ENCODE measurements at regions of chr2 and their contacts with region 1.

Region 1: GRCh38 chr2:168118733-168119514 is 128.5 kb downstream of the STK39 start:
- DNase-seq: no peak
- ATAC-seq: no peak
- H3K4me3 Mint-ChIP-seq: no peak overlapping the region
- H3K27ac Mint-ChIP-seq: no peak overlapping the region
- H3K4me1 Mint-ChIP-seq: no peaks in the 10 kb centered on the region
- H3K27me3 Mint-ChIP-seq: no peaks in the 10 kb centered on the region

Region 2: GRCh38 chr2:167292430-167293171 is 826.3 kb before region 1 on chr2:
- CTCF ChIA-PET with region 1: no interaction called
- POLR2A ChIA-PET with region 1: no interaction called
- intact Hi-C with region 1: loop called in 1 of 2 experiments (anchors 10 kb)
- DNase-seq: peak; percentile 86
- ATAC-seq: peak; percentile 99
- H3K4me3 Mint-ChIP-seq: peak within 1 kb of the TSS; percentile 65
- H3K27ac Mint-ChIP-seq: no peak within 1 kb of the TSS
- H3K4me1 Mint-ChIP-seq: peaks cover 13% of the 10 kb centered on the region
- H3K27me3 Mint-ChIP-seq: peaks cover 38% of the 10 kb centered on the region

Region 3: DNA sequence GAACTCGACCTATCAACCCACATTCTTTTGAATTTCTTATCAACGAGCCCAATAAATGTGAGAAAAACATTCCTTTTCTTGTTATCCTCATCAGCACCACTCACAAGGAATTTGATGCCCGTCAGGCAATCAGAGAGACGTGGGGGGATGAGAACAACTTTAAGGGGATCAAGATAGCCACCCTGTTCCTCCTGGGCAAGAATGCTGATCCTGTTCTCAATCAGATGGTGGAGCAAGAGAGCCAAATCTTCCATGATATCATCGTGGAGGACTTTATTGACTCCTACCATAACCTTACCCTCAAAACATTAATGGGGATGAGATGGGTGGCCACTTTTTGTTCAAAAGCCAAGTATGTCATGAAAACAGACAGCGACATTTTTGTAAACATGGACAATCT is 249.7 kb before region 1 on chr2:
- CTCF ChIA-PET with region 1: interaction called, 3 read pairs
- POLR2A ChIA-PET with region 1: no interaction called
- intact Hi-C with region 1: loop called (anchors 5 to 10 kb)
- DNase-seq: no peak
- ATAC-seq: no peak
- H3K4me3 Mint-ChIP-seq: no peak overlapping the region
- H3K27ac Mint-ChIP-seq: no peak overlapping the region
- H3K4me1 Mint-ChIP-seq: no peaks in the 10 kb centered on the region
- H3K27me3 Mint-ChIP-seq: peaks cover 13% of the 10 kb centered on the region

Region 4: DNA sequence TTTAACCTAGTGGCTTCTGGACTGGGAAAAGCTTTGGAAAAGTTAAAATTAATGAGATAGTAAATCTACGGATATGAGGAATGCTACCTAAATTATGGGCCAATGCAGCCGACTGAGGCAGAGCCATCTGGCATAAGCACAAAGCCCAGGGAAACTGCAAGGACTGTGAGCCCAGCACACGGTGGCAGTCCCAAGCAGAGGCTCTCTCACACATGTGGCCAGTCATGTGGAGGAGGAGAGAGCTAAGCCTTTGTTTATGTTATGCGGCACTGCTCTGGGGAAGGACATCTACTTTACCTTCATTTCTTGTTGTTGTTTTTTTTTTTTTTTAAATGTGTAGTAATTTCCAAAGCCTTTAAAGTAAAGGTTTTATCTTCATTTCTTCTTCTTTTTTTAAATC is 138.5 kb before region 1 on chr2:
- CTCF ChIA-PET with region 1: no interaction called
- POLR2A ChIA-PET with region 1: no interaction called
- intact Hi-C with region 1: no loop called
- DNase-seq: no peak
- ATAC-seq: no peak
- H3K4me3 Mint-ChIP-seq: no peak overlapping the region
- H3K27ac Mint-ChIP-seq: no peak overlapping the region
- H3K4me1 Mint-ChIP-seq: no peaks in the 10 kb centered on the region
- H3K27me3 Mint-ChIP-seq: no peaks in the 10 kb centered on the region

Region 5: GRCh38 chr2:168107322-168107721 is 11.6 kb before region 1 on chr2:
- CTCF ChIA-PET with region 1: interaction called, 54 read pairs
- POLR2A ChIA-PET with region 1: no interaction called
- intact Hi-C with region 1: no loop called
- DNase-seq: no peak
- ATAC-seq: no peak
- H3K4me3 Mint-ChIP-seq: no peak overlapping the region
- H3K27ac Mint-ChIP-seq: no peak overlapping the region
- H3K4me1 Mint-ChIP-seq: no peaks in the 10 kb centered on the region
- H3K27me3 Mint-ChIP-seq: no peaks in the 10 kb centered on the region

Region 6: DNA sequence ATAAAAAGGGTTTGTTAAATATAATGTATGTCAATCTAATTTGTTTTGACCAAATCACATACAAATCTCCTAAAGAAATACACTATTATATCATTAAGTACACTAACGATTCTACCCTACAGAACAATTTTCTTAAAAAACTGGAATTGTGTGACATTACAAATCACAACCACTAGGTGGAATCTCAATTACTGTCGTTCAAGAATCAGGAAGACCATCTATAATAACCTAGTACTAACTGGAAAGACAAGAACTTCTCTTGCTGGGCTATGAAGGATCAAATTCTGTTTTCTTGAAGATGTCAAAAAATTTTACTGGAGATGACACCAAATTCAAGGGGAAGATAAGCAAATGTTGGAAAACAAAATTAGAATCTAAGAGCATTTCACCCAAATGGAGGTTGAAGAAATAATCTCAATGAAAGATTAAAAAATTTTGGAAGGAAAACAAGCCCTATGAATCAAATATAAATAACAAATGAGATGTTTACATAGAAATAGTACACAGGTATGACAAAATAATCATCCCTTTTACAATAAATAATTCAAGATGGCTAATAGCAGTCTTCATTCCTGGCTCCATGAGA is 17.6 kb after region 1 on chr2:
- CTCF ChIA-PET with region 1: interaction called, 20 read pairs
- POLR2A ChIA-PET with region 1: no interaction called
- intact Hi-C with region 1: no loop called
- DNase-seq: no peak
- ATAC-seq: peak; percentile 26
- H3K4me3 Mint-ChIP-seq: no peak overlapping the region
- H3K27ac Mint-ChIP-seq: no peak overlapping the region
- H3K4me1 Mint-ChIP-seq: peaks cover 20% of the 10 kb centered on the region
- H3K27me3 Mint-ChIP-seq: no peaks in the 10 kb centered on the region

Region 7: GRCh38 chr2:168300460-168300859 is 181.5 kb after region 1 on chr2:
- CTCF ChIA-PET with region 1: no interaction called
- POLR2A ChIA-PET with region 1: no interaction called
- intact Hi-C with region 1: no loop called
- DNase-seq: no peak
- ATAC-seq: no peak
- H3K4me3 Mint-ChIP-seq: no peak overlapping the region
- H3K27ac Mint-ChIP-seq: no peak overlapping the region
- H3K4me1 Mint-ChIP-seq: no peaks in the 10 kb centered on the region
- H3K27me3 Mint-ChIP-seq: peaks cover 3% of the 10 kb centered on the region

Region 8: GRCh38 chr2:168443818-168444217 is 324.9 kb after region 1 on chr2:
- CTCF ChIA-PET with region 1: no interaction called
- POLR2A ChIA-PET with region 1: no interaction called
- intact Hi-C with region 1: no loop called
- DNase-seq: no peak
- ATAC-seq: no peak
- H3K4me3 Mint-ChIP-seq: no peak overlapping the region
- H3K27ac Mint-ChIP-seq: no peak overlapping the region
- H3K4me1 Mint-ChIP-seq: peaks cover 26% of the 10 kb centered on the region
- H3K27me3 Mint-ChIP-seq: no peaks in the 10 kb centered on the region